SK-N-SH (cell line): ENCODE measurements at regions of chr9 and their contacts with region 1.

Region 1: DNA sequence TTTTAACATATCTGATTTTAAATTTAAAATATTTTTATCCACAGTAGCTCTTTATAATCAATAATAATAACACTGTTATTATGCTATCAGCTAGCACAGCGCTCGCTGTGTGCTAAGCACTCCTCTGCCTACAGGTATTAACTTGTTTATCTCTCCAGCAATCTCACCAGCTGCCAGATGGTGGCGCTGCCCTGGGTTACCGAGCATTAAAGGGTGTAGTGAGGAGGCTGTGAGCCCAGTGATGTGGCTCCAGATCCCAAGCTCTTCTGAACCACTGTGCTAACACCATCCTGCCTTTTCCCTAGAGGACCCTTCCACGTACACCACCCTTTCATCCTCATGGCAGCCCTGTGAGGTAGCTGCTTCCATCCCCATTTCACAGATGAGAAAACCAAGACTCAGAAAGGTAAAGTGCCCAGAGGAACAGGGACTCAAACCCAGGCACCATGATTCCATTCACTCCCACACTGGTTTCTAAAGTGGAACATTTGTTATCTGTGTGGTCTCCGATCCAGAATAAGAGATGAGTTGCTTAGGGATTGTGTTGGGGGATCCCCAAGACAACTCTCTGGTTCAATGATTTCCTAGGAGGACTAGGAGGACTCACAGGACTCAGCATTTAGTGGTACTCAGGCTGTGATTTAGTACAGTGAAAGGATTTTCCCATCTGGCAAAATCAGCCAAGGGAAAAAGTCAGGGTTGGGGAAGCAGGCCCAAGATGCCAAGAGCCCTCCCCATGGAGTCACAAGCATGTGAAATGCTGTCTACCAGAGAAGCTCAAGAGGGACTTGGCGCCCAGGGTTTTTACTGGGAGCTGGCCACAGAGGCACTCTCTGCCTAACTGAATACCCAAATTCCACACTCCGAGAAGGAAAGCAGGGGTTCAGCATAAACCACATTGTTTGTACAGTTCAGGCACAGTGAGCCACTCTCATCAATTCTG is 7.0 kb downstream of the IGFBPL1 start:
- DNase-seq: peak; percentile 68
- H3K4me3 ChIP-seq: no peak overlapping the region; a peak in 1 of 4 replicates
- H3K27ac ChIP-seq: peak overlapping the region in 1 of 2 experiments; percentile 52; a peak in 2 of 4 replicates
- H3K4me1 ChIP-seq: peaks cover 3 to 57% of the 10 kb centered on the region in 2 experiments; a peak in 1 of 4 replicates
- H3K27me3 ChIP-seq: peaks cover 17% of the 10 kb centered on the region
- CTCF ChIP-seq: peak; percentile 65
- EP300 ChIP-seq: no peak
- RAD21 ChIP-seq: peak; percentile 54

Region 2: GRCh38 chr9:38352530-38353328 is 64.5 kb before region 1 on chr9:
- CTCF ChIA-PET with region 1: no interaction called
- POLR2A ChIA-PET with region 1: no interaction called
- DNase-seq: no peak
- H3K4me3 ChIP-seq: no peak overlapping the region
- H3K27ac ChIP-seq: no peak overlapping the region
- H3K4me1 ChIP-seq: peaks cover 0 to 9% of the 10 kb centered on the region in 2 experiments; a peak in 1 of 4 replicates
- H3K27me3 ChIP-seq: no peaks in the 10 kb centered on the region; the same call in 1 of the 2 replicates
- CTCF ChIP-seq: no peak
- EP300 ChIP-seq: no peak
- RAD21 ChIP-seq: no peak

Region 3: DNA sequence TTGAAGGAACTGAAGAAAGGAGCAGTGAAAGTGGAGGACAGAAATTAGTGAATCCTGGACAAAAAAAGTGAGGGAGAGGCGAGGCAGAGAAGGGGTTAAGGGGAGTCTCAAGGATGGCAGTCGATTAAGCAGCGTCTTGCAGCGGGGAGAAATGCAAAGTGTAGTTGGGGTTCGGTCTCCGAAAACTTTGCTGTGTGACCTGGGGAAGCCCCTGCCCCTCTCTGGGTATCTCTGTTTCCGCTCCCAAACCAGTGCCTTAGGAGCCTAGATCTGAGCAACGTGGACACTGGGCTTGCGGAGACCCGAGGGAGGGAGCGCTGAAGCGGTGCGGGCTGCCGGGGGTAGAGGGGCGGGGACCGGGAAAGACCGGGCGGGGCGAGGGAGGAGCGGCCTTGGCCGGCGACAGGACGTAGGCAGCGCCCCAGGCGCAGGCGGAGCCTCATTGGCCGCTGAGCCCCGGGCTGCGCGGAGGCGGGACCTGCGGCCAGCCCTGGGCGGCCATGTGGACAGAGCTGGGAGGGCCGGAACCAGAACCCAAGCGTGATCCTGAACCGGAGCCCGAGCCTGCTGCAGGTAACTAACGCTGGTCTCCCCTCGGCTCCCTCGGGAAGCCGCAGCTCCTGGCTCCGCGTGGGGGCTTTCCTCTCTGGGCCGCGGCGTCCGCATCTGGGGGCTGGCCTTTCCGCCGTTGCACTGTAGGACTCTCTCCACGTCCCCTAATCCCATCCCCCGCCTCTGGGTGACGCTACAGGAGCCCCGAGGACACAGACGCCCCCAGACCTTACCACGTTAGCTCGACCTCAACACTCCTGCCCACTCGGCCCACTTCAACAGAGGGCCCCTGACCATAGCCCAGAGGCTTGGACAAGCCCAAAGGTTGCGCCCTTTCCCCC is 24.8 kb before region 1 on chr9 and contains the start of gene ALDH1B1:
- CTCF ChIA-PET with region 1: interaction called, 11 read pairs
- POLR2A ChIA-PET with region 1: no interaction called
- DNase-seq: peak; percentile 96
- H3K4me3 ChIP-seq: peak within 1 kb of the TSS; percentile 90 to 92
- H3K27ac ChIP-seq: peak within 1 kb of the TSS in 1 of 2 experiments; percentile 58; a peak in 3 of 4 replicates
- H3K4me1 ChIP-seq: peaks cover 0 to 10% of the 10 kb centered on the region in 2 experiments; a peak in 3 of 4 replicates
- H3K27me3 ChIP-seq: no peaks in the 10 kb centered on the region
- CTCF ChIP-seq: peak; percentile 47
- EP300 ChIP-seq: no peak
- RAD21 ChIP-seq: no peak
- polyA plus RNA-seq, gene ALDH1B1: 16.5 and 18.4 TPM in 2 replicates

Region 4: DNA sequence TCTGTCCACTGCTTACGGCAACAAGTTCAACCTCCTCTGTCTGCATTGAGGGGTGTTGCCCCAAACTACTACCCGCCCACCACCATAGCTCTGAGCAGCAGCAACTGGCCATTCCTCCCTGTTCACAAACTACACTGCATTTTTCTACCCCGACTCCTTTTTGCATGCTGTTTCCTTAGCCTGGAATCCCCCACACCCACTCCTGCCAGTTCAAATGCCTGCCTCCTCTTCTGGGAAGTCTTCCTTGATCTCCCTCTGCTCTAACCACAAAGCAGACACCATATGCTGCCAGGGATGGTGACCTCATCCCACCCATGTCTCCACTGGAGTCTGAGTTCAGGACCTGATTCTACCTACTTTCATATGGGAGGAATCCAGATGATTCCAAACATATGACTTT is 11.5 kb before region 1 on chr9:
- CTCF ChIA-PET with region 1: interaction called, 31 read pairs
- POLR2A ChIA-PET with region 1: interaction called, 5 read pairs
- DNase-seq: no peak
- H3K4me3 ChIP-seq: no peak overlapping the region
- H3K27ac ChIP-seq: no peak overlapping the region
- H3K4me1 ChIP-seq: peaks cover 0 to 5% of the 10 kb centered on the region in 2 experiments; a peak in 1 of 4 replicates
- H3K27me3 ChIP-seq: peaks cover 4% of the 10 kb centered on the region; the same call in 1 of the 2 replicates
- CTCF ChIP-seq: no peak
- EP300 ChIP-seq: no peak
- RAD21 ChIP-seq: no peak

Region 5: GRCh38 chr9:38432922-38433510 is 15.7 kb after region 1 on chr9:
- CTCF ChIA-PET with region 1: interaction called, 93 read pairs
- POLR2A ChIA-PET with region 1: no interaction called
- DNase-seq: peak; percentile 47
- H3K4me3 ChIP-seq: no peak overlapping the region
- H3K27ac ChIP-seq: no peak overlapping the region
- H3K4me1 ChIP-seq: no peaks in the 10 kb centered on the region
- H3K27me3 ChIP-seq: peaks cover 9% of the 10 kb centered on the region; the same call in 1 of the 2 replicates
- CTCF ChIP-seq: peak; percentile 69
- EP300 ChIP-seq: no peak
- RAD21 ChIP-seq: peak; percentile 71